Colonic mucosa (tissue), 4 donors: ENCODE measurements at regions of chr15 and their contacts with region 1.

Region 1: DNA sequence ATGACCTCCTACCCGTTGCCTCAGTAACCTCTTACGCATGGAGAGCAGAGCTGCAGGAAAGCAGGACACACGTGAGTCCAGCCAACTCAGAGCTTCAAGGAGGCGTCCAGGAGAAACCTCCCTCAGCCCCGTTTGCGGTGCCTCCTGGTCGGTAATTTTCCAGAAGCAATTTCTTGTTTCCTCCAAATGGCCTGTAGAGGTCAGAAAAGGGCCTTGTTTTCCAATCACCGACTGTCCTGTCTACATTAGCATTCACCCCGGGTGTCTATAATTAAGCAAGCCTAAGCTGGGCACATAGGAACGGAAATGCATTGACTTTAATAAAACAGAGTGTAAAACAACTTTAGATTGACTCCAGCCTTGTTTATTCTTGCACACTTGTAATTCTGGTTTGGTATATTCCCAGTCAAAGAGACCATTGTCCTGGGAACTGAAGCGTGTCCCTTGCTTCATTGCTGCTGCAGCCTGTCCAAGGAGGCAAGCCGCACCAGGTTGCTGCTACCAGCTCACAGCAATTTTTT is 836.2 kb downstream of the AGBL1 start:
- DNase-seq: no peak
- H3K4me3 ChIP-seq: no peak overlapping the region
- H3K27ac ChIP-seq: no peak overlapping the region
- H3K4me1 ChIP-seq: no peaks in the 10 kb centered on the region
- H3K27me3 ChIP-seq: no peaks in the 10 kb centered on the region
- CTCF ChIP-seq: no peak

Region 2: DNA sequence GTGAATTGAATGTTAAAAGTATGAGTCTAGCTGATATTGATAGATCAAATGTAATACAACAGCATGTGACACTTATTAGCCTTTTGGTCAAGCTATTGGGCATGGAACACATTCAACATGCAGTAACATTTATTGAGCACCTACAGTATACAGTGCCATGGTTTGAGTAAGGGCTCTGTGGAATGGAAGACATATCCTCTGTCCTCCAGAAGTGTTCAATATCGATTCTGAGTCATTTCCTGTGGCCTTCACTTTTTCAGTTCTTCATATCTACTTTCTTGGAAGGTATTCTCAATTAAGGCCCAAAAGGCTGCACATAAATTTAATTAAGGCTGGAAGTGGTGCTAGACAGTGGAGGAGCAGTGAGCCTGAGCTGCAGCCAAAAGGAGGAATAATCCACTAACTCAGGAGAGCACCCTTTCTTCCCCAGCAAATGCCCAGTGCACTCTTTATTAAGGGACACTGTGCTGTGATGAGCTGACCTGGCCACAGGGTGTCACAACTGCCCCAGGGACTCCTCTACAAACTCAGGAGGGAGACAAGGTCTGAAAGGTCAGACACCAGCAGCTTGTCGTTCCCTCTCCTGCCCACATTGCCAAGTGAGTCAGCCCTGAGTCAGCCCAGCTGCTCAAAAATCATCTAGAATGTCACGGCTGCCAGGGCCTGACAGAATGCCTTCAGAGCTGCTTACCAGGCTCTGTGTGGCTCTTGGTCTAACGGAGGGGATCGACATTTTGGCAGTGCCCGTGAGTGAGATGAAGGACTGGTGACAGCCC is 291.4 kb before region 1 on chr15:
- intact Hi-C with region 1: no loop called
- DNase-seq: peak; percentile 84
- H3K4me3 ChIP-seq: no peak overlapping the region
- H3K27ac ChIP-seq: no peak overlapping the region
- H3K4me1 ChIP-seq: no peaks in the 10 kb centered on the region
- H3K27me3 ChIP-seq: no peaks in the 10 kb centered on the region
- CTCF ChIP-seq: peak; percentile 43

Region 3: GRCh38 chr15:88246666-88247446 is 1331.0 kb after region 1 on chr15:
- intact Hi-C with region 1: loop called (anchors 5 kb)
- DNase-seq: peak; percentile 63
- H3K4me3 ChIP-seq: no peak overlapping the region
- H3K27ac ChIP-seq: no peak overlapping the region
- H3K4me1 ChIP-seq: no peaks in the 10 kb centered on the region
- H3K27me3 ChIP-seq: no peaks in the 10 kb centered on the region
- CTCF ChIP-seq: peak; percentile 95